ENCODE measurements at regions of chr14 and their contacts with region 1.

Region 1: DNA sequence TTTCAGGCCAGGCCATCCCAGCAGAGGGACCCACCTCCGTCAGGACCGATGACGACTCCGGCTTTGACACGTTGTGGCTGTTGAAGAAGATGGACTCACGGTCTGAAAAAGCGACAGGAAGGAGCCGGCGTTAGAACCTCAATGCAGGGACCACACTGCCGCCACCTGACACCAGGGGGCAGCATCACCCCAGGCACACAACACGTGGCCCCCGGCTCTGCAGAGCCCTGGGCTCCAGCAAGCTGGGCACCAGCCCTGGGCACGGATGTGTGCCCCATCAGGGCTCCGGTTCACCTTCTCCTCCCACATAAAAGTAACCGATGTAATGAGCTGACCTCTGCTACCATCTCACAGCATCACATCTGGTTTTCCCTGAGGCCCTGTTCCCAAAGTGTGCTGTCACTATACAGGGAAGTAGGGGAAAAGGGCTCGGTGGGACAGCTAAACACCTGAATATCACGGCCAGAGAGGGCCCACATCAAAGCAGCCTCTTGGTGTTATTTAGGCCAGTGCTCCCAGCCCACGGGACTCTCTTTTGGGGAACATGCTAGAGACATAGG is 29.0 kb downstream of the CHGA start:
- DNase-seq: peak; percentile 92
- CTCF ChIP-seq: peak; percentile 85

Region 2: GRCh38 chr14:93132470-93133065 is 180.6 kb after region 1 on chr14:
- CTCF ChIA-PET with region 1: interaction called, 38 read pairs
- POLR2A ChIA-PET with region 1: no interaction called
- DNase-seq: no peak
- CTCF ChIP-seq: peak; percentile 49

Region 3: GRCh38 chr14:93137864-93138263 is 185.9 kb after region 1 on chr14:
- CTCF ChIA-PET with region 1: interaction called, 38 read pairs
- POLR2A ChIA-PET with region 1: no interaction called
- DNase-seq: no peak
- CTCF ChIP-seq: no peak

Region 4: GRCh38 chr14:93146119-93146518 is 194.1 kb after region 1 on chr14:
- CTCF ChIA-PET with region 1: interaction called, 38 read pairs
- POLR2A ChIA-PET with region 1: no interaction called
- DNase-seq: peak; percentile 39
- CTCF ChIP-seq: no peak

Region 5: DNA sequence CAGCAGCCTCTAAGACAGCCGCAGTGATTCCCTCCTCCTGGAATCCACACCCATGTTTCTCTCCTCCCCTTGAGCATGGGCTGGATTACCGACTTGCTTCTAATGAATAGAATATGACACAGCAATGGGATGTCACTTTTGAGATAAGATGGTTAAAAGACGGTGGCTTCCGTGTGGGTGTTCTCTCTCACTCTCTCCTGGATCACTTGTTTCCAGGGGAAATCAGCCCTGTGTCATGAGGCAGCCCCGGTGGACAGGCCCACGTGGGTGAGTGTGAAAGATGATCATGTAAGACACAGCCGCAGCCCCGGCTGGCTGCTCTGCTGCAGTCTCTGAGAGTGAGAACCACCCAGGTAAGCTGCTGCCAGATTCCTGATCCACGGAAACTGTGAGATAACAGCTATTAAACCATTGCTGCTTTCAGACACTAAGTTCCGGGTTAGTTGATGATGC is 222.0 kb after region 1 on chr14:
- CTCF ChIA-PET with region 1: interaction called, 15 read pairs
- POLR2A ChIA-PET with region 1: no interaction called
- DNase-seq: no peak
- CTCF ChIP-seq: no peak

Region 6: GRCh38 chr14:93184388-93185353 is 232.7 kb after region 1 on chr14 and contains the starts of genes LYSET and MOAP1:
- CTCF ChIA-PET with region 1: interaction called, 11 read pairs
- POLR2A ChIA-PET with region 1: no interaction called
- DNase-seq: peak; percentile 94
- CTCF ChIP-seq: peak; percentile 27